Activated T-helper 2 cell treated with anti-CD3 and anti-CD28 coated beads, Interferon-gamma antibody, Interleukin-2, Interleukin-4, amounts not matched to agents 10 μg/mL and 5 μg/mL and 100 μg/mL, durations not matched to agents 14 hours and 24 hours and 36 hours (primary cell): ENCODE measurements at regions of chr6 and their contacts with region 1.

Region 1: DNA sequence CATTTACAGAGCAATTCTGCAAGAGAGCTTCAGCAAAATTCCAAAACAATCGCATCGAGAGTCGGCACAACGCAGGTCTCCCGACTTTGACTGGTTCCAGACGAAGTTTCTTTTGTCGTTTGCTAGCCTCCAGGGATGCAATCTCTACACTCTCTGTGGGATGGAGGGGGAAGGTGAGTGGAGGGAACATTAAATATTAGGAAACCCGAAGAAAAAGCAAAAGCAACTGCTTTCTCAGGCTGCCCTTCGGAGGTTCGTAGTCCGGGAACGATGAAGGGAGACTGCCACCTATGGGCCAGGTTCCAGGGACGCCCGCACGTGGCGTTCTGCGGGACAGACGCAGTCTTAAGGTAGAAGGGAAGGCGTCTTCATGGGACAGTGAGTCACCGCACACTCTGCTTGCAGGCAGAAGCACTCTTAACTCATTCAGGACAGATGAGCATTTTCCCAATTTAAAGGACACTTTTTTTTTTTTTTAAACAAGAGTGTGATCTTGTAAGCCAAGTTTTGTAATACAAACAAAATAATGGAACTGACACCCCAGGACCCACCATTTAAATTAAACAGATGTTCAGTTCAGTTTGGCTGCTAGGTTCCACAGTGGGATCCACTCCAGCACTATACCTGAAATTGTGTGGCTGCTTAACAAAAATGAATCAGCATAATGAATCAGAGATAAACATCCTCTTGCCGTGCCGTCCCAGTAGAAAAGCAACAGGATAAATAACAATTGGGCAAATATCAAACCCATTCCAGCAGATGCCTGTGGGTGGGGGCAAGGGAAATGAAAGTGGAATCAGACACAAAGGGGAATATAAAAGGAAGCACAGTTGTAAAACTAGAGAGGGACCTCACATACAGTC is 65.8 kb upstream of the ARMC2 start:
- DNase-seq: peak; percentile 65
- H3K4me3 Mint-ChIP-seq: peak overlapping the region; percentile 55
- H3K27ac Mint-ChIP-seq: no peak overlapping the region
- H3K4me1 Mint-ChIP-seq: peaks cover 11% of the 10 kb centered on the region
- H3K27me3 Mint-ChIP-seq: peaks cover 66% of the 10 kb centered on the region

Region 2: GRCh38 chr6:108541838-108542759 is 240.3 kb before region 1 on chr6:
- intact Hi-C with region 1: loop called (anchors 1 kb)
- DNase-seq: peak; percentile 53
- H3K4me3 Mint-ChIP-seq: no peak overlapping the region
- H3K27ac Mint-ChIP-seq: no peak overlapping the region
- H3K4me1 Mint-ChIP-seq: peaks cover 15% of the 10 kb centered on the region
- H3K27me3 Mint-ChIP-seq: peaks cover 42% of the 10 kb centered on the region

Region 3: DNA sequence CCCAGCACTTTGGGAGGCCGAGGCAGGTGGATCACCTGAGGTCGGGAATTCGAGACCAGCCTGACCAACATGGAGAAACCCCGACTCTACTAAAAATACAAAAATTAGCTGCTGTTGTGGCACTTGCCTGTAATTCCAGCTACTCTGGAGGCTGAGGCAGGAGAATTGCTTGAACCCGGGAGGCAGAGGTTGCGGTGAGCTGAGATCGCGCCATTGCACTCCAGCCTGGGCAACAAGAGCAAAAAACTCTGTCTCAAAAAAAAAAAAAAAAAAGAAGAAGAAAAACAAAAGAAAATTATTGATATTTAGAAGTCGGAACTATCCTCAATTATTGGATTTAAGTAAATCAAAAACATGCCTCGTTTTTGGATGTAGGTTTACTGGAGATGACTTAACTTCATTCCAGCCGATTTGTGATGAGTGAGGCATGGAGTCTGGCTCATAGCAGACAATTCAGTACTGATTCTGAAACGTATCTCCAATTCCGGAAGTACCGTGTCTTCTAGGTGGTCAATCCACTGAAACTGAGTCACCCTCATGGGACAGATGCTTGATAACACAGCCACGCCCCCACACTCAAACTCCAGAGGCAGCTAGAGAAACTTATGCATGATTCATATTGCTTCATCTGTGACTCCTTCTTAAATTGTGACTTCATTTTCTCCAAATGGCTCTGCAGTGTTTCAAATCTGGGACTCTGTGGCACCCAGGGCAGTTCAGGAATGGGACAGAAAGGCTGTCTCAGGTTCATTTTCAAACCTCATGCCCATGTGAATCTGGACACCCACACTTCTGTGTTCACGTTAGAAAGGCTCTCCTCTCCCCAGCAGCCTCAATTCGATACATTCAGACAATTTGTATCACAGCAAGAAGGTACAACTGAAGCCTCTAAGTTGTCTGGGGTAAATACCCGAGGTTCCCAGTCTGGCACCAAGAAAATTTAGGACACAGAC is 44.5 kb before region 1 on chr6:
- intact Hi-C with region 1: loop called (anchors 5 kb)
- DNase-seq: peak; percentile 13
- H3K4me3 Mint-ChIP-seq: no peak overlapping the region
- H3K27ac Mint-ChIP-seq: no peak overlapping the region
- H3K4me1 Mint-ChIP-seq: peaks cover 9% of the 10 kb centered on the region
- H3K27me3 Mint-ChIP-seq: peaks cover 36% of the 10 kb centered on the region

Region 4: GRCh38 chr6:108835218-108835850 is 52.9 kb after region 1 on chr6:
- intact Hi-C with region 1: loop called (anchors 2 kb)
- DNase-seq: peak; percentile 71
- H3K4me3 Mint-ChIP-seq: no peak overlapping the region
- H3K27ac Mint-ChIP-seq: no peak overlapping the region
- H3K4me1 Mint-ChIP-seq: peaks cover 26% of the 10 kb centered on the region
- H3K27me3 Mint-ChIP-seq: peaks cover 20% of the 10 kb centered on the region

Region 5: GRCh38 chr6:109153752-109154151 is 371.3 kb after region 1 on chr6:
- intact Hi-C with region 1: no loop called
- DNase-seq: no peak
- H3K4me3 Mint-ChIP-seq: no peak overlapping the region
- H3K27ac Mint-ChIP-seq: no peak overlapping the region
- H3K4me1 Mint-ChIP-seq: no peaks in the 10 kb centered on the region
- H3K27me3 Mint-ChIP-seq: no peaks in the 10 kb centered on the region